Gastrocnemius medialis (tissue), 4 donors: ENCODE measurements at regions of chr3 and their contacts with region 1.

Region 1: GRCh38 chr3:100796556-100796955 is 87.3 kb downstream of the TFG start:
- DNase-seq: no peak
- ATAC-seq: no peak
- H3K4me3 ChIP-seq: peak overlapping the region in 1 of 4 donors; percentile 9
- H3K27ac ChIP-seq: no peak overlapping the region
- H3K4me1 ChIP-seq: no peaks in the 10 kb centered on the region
- H3K27me3 ChIP-seq: no peaks in the 10 kb centered on the region
- CTCF ChIP-seq: peak in 3 of 5 experiments; percentile 8 to 32 (median 19)
- POLR2A ChIP-seq: no peak

Region 2: DNA sequence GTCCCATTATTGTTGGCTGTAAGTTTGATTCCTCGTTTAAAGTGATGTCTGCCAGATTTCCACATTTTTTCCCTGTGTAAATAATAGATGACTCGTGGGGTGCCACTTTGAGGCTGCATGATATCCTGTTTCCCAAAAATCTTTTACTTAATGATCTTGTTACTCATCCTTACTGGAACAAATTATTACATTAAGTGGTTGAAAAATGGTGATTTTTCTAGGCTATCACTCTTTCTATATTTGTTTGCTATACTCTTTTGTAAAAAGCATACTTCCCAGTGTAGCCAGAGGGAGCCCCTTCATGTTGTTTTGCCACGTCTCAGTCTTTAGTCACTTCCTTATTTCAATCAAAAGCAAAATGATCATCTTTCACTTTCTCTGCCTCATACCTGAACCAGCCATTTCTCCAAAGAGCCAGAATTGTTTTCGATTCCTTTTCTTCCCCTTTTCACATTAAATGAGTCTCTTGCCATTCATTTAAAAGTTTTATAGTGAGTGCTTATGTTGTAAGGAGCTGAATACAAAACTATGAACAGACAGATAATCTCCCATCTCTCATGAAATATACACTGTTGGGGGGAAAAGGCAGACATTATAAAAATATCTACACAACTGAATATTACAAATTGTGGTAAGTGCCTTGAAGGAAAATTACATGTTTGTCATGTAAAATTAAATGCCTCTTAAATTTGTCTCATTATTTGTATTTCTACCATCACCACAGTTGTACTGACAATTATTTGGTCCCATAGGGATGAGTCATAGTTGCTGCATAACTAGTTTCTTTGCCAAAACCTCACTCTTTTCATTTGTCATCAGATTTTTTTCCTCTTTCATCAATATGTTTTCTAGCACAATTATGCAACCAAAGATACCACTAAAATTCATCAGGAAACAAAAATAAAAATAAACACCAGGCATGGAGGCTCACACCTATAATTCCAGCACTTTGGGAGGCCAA is 145.6 kb before region 1 on chr3:
- in situ Hi-C with region 1: no loop called
- intact Hi-C with region 1: no loop called
- DNase-seq: no peak
- ATAC-seq: peak; percentile 58 to 70
- H3K4me3 ChIP-seq: no peak overlapping the region
- H3K27ac ChIP-seq: peak overlapping the region in 1 of 4 donors; percentile 15
- H3K4me1 ChIP-seq: no peaks in the 10 kb centered on the region
- H3K27me3 ChIP-seq: no peaks in the 10 kb centered on the region
- CTCF ChIP-seq: no peak
- POLR2A ChIP-seq: no peak

Region 3: DNA sequence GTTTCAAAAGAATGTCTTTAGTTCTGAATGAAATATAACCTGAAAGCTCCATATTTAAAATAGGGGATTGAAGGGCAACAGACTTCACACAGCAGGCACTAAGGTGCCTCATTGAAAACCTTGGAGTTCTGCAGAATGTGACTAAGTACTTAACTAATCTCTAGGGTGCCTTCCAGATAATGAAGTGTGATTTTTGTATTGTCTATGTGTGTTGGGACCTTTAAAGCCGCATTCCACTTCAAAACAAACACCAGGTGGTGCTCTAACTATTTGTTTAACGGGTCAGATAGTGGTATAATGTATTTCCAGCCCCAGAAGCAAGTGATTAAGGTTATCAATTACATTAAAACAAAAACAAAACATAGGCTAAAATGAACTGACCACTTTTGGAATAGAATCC is 59.2 kb before region 1 on chr3:
- in situ Hi-C with region 1: no loop called
- intact Hi-C with region 1: loop called (anchors 1 kb)
- DNase-seq: no peak
- ATAC-seq: no peak
- H3K4me3 ChIP-seq: no peak overlapping the region
- H3K27ac ChIP-seq: peak overlapping the region in 2 of 4 donors; percentile 52 to 54
- H3K4me1 ChIP-seq: peaks cover 22 to 29% of the 10 kb centered on the region in 2 donors
- H3K27me3 ChIP-seq: no peaks in the 10 kb centered on the region
- CTCF ChIP-seq: peak in 4 of 5 experiments; percentile 33 to 47 (median 39)
- POLR2A ChIP-seq: no peak